ENCODE measurements at regions of chr10 and their contacts with region 1.

Region 1: GRCh38 chr10:51023636-51024035 is 50.7 kb upstream of the PRKG1 start:
- DNase-seq: no peak

Region 2: DNA sequence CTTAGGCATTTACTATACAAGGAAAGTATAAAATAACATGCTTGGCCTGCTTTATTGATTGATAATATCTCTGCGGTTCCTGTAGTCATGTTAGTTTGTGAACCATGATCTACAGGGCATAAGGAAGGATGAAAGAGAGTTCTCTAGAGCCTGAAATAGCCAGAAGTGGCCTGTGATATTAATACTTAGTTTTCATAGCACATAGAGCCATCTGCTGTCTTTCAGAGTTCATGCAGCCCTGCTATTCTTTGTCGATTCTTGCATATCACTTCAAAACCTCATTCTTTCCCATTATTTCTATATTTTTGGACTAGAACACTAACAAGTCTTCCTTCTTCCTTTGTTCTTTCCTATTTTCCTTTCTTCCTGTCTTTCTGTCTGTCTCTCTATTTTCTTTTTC is 24.2 kb after region 1 on chr10:
- intact Hi-C with region 1: loop called in 1 of 2 experiments (anchors 2 kb)
- DNase-seq: no peak

Region 3: DNA sequence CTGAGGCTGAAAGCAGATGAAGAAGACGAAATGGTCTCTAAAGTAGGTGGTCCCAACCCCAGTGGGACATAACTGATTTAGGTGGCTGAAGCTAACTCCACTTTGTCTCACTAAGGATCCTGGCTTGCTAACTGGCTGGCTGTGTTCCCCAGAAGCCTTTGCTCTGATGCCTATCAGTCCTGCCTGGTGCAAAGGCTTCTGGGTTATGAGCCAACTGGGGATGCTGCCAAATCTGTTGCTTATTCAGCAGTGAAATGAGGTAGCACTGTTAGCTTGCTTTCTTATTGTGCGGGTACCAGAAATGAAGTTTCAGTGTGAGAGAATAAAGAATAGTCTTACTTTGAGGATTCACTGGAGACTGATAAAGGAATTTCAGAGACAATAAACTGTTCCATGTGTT is 68.8 kb after region 1 on chr10:
- intact Hi-C with region 1: no loop called
- DNase-seq: peak; percentile 84

Measured in posterior vena cava (tissue), 2 donors.